ENCODE measurements at regions of chr2 and their contacts with region 1.

Region 1: DNA sequence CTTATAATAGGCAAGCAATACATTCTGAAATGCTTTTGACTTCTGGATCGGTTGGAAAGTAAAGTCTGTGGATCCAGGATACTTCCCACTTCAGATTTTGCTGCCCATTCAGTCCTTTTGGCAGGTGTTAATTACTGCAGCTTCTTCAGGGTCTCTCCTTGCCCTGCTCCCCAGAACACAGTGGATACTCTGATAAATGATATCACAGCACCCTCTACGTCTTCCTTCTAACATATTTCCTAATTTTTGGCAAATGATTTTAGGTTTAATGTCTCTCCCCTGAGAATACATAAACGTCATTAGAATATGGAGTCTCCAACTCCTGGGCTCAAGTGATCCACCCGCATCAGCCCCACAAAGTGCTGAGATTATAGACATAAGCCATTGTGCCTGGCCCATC is 249.8 kb downstream of the NYAP2 start:
- DNase-seq: no peak
- ATAC-seq: no peak
- H3K4me3 Mint-ChIP-seq: no peak overlapping the region
- H3K27ac Mint-ChIP-seq: no peak overlapping the region
- H3K4me1 Mint-ChIP-seq: no peaks in the 10 kb centered on the region
- H3K27me3 Mint-ChIP-seq: peaks cover 6% of the 10 kb centered on the region
- CTCF ChIP-seq: no peak

Region 2: GRCh38 chr2:225122583-225123486 is 526.4 kb before region 1 on chr2:
- CTCF ChIA-PET with region 1: no interaction called
- POLR2A ChIA-PET with region 1: no interaction called
- intact Hi-C with region 1: loop called (anchors 10 kb)
- DNase-seq: peak; percentile 54
- ATAC-seq: peak; percentile 53
- H3K4me3 Mint-ChIP-seq: no peak overlapping the region
- H3K27ac Mint-ChIP-seq: no peak overlapping the region
- H3K4me1 Mint-ChIP-seq: no peaks in the 10 kb centered on the region
- H3K27me3 Mint-ChIP-seq: no peaks in the 10 kb centered on the region
- CTCF ChIP-seq: peak; percentile 62

Region 3: GRCh38 chr2:225660262-225661131 is 11.2 kb after region 1 on chr2:
- CTCF ChIA-PET with region 1: interaction called, 18 read pairs
- POLR2A ChIA-PET with region 1: no interaction called
- intact Hi-C with region 1: no loop called
- DNase-seq: peak; percentile 90
- ATAC-seq: peak; percentile 81
- H3K4me3 Mint-ChIP-seq: no peak overlapping the region
- H3K27ac Mint-ChIP-seq: no peak overlapping the region
- H3K4me1 Mint-ChIP-seq: no peaks in the 10 kb centered on the region
- H3K27me3 Mint-ChIP-seq: peaks cover 17% of the 10 kb centered on the region
- CTCF ChIP-seq: peak; percentile 74

Measured in activated CD8-positive, alpha-beta T cell treated with anti-CD3 and anti-CD28 coated beads for 36 hours (primary cell).